Left ventricle myocardium inferior (tissue), 1 donor: ENCODE measurements at regions of chr11 and their contacts with region 1.

Region 1: GRCh38 chr11:124837491-124837856 is 27.8 kb upstream of the ROBO3 start:
- DNase-seq: no peak
- H3K4me3 ChIP-seq: no peak overlapping the region
- H3K27ac ChIP-seq: no peak overlapping the region
- H3K4me1 ChIP-seq: peaks cover 25% of the 10 kb centered on the region
- H3K27me3 ChIP-seq: peaks cover 76% of the 10 kb centered on the region
- CTCF ChIP-seq: no peak

Region 2: DNA sequence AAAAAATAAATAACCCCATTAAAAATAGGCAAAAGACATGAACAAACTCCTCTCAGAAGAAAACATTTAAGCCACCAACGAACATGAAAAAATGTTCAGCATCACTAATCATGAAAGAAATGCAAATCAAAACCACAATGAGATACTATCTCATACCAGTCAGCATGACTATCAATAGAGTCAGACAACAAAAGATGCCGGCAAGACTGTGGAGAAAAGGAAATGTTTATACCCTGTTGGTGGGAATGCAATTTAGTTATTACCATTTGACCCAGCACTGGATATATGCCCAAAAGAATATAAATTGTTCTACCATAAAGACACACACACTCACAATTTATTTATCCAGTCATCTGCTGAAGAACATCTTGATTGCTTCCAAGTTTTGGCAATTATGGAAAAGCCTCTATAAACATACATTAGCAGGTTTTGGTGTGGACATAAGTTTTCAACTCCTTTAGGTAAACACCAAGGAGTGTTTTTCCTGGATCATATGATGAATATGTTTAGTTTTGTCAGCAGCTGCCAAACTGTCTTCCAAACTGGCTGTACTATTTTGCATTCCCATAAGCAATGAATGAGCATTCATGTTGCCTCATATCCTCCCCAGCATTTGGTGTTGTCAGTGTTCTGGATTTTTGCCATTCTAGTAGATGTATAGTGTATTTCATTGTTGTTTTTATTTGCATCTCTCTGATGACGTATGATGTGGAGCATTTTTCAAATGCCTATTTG is 551.7 kb before region 1 on chr11:
- intact Hi-C with region 1: no loop called
- DNase-seq: no peak
- H3K4me3 ChIP-seq: no peak overlapping the region
- H3K27ac ChIP-seq: no peak overlapping the region
- H3K4me1 ChIP-seq: no peaks in the 10 kb centered on the region
- H3K27me3 ChIP-seq: no peaks in the 10 kb centered on the region
- CTCF ChIP-seq: no peak

Region 3: DNA sequence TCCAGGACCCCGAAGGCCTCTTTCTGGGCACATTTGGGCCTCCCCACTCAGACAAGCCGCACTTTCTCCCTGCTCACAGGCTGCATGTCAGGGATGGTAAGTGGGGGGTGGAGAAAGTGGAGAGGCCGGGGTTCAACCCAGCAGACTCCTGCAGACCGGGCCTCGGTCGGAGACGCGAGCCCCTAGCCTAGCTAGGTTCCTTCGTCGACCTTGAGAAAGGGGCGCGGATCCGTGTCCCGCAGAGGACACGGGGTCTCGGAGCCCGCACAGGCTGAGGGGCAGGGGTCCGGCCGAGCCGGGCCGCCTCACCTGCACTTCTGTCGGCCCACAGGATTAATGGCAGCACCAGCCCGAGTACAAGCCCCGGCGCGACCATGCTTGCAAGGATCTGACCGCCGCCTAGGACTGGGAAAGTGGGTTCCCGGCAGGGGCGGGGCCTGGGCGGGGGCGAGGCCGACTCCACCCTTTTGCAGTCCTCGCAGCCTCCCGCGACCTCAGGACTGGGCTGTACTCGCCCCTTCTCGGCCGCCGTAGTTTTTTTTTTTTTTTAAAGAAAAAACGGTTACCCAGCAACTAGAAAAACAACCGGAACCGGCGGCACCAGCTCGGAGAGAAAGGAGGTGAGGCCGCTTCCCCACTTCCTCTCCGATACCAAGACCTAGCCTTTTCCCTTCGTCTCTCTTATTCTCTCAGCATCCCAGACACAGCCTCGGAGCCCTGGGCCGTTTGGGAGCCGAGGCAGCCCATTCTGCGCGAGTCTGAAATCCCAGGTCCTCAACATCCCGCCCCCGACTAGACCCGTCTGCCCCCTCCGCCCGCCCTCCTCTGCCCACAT is 163.9 kb before region 1 on chr11 and contains the starts of genes SIAE and SPA17:
- intact Hi-C with region 1: loop called (anchors 5 kb)
- DNase-seq: peak; percentile 95
- H3K4me3 ChIP-seq: peak within 1 kb of the TSS; percentile 76
- H3K27ac ChIP-seq: peak within 1 kb of the TSS; percentile 90
- H3K4me1 ChIP-seq: peaks cover 39% of the 10 kb centered on the region
- H3K27me3 ChIP-seq: no peaks in the 10 kb centered on the region
- CTCF ChIP-seq: no peak
- total RNA-seq, gene SIAE: 68.8 TPM
- total RNA-seq, gene SPA17: 3.0 TPM